Activated CD4-positive, alpha-beta memory T cell treated with anti-CD3 and anti-CD28 coated beads for 36 hours (primary cell): ENCODE measurements at regions of chr2 and their contacts with region 1.

Region 1: DNA sequence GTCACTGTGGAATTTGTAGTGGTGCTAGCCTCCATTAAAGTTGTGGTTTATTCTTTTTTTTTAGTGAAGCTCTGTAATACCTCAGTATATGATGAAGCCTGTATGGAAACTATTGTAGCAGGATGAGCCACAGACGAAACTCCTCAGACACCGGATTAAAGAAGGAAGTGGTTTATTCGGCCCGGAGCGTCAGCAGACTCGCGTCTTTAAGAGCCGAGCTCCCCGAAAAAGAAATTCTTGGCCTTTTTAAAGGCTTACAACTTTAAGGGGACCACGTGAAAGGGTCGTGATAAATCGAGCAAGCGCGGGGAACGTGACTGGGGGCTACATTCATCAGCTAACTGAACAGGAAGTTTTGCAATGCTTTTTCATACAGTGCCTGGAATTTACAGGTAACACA is 8.1 kb upstream of the CCL20 start:
- DNase-seq: peak; percentile 66
- H3K4me3 Mint-ChIP-seq: peak overlapping the region; percentile 72
- H3K27ac Mint-ChIP-seq: peak overlapping the region; percentile 81
- H3K4me1 Mint-ChIP-seq: peaks cover 14% of the 10 kb centered on the region
- H3K27me3 Mint-ChIP-seq: peaks cover 1% of the 10 kb centered on the region

Region 2: DNA sequence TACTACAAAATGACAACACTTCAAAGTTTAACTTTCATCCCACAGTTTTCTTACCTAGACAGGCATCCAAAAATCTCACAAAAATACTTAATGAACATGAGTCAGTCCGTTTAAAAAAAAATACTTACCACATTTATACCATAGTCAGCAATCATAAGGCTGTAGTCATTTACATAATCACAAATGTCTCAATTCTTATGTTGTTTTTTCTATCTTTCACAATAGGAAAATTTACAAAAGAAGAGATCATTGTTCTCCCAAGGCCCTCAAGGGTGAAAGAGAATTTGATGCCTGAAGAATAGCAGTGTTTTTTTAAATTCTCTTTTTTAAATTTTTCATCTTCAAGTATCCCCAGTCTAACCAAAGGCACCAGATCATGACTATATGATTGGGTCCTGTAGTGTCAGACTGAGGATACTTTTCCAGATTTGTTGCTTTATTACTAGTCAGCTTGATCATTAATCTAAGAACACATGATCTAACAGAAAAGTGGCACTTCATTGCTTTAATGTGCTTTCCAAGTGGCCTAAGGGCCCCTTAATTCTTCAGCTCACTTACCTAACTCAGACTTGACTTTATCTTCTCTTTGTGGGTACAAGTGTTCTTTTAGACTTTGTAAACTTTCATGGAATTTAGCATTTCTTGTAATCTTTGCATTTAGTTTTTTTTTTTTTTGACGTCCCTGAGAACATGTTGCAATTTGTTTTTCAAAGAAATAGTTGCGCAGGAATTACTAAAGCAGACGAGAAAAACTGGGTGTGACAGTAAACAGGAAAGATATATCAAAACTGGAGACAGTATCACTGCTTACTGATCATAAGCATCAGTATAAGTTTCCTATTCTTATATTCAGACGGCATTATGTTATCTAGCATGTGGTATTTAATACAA is 134.2 kb before region 1 on chr2:
- CTCF ChIA-PET with region 1: no interaction called
- POLR2A ChIA-PET with region 1: no interaction called
- intact Hi-C with region 1: no loop called
- DNase-seq: no peak
- H3K4me3 Mint-ChIP-seq: no peak overlapping the region
- H3K27ac Mint-ChIP-seq: no peak overlapping the region
- H3K4me1 Mint-ChIP-seq: no peaks in the 10 kb centered on the region
- H3K27me3 Mint-ChIP-seq: no peaks in the 10 kb centered on the region

Region 3: GRCh38 chr2:227848586-227848985 is 43.0 kb after region 1 on chr2:
- CTCF ChIA-PET with region 1: interaction called, 3 read pairs
- POLR2A ChIA-PET with region 1: no interaction called
- intact Hi-C with region 1: loop called (anchors 5 kb)
- DNase-seq: peak; percentile 31
- H3K4me3 Mint-ChIP-seq: peak overlapping the region; percentile 55
- H3K27ac Mint-ChIP-seq: peak overlapping the region; percentile 84
- H3K4me1 Mint-ChIP-seq: peaks cover 28% of the 10 kb centered on the region
- H3K27me3 Mint-ChIP-seq: no peaks in the 10 kb centered on the region